Activated T-helper 2 cell treated with anti-CD3 and anti-CD28 coated beads, Interferon-gamma antibody, Interleukin-2, Interleukin-4, amounts not matched to agents 10 μg/mL and 5 μg/mL and 100 μg/mL, durations not matched to agents 14 hours and 24 hours and 36 hours (primary cell): ENCODE measurements at regions of chr12 and their contacts with region 1.

Region 1: DNA sequence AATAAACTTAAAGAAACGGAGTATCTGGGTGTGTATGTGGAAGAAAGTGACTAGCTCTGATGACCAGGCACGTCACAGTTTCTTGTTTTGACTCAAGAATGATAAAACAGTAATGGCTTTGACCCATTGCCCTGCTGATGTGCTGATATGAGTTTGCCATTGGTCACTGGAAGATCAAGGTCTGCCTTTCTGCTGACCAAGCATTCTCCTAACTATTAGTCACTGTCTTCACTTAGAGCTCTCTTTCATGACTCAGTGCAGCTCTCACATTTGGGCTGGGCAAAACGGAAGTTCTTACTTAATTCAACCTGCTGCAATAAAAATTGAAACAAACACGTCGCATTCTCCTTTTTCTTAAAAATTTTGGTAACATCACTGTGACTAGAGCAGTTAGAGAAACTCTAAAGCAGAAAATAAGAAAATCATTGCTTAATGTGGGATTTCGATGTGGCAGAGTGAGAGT is 366.7 kb downstream of the BTG1 start:
- DNase-seq: peak; percentile 17
- H3K4me3 Mint-ChIP-seq: peak overlapping the region; percentile 62
- H3K27ac Mint-ChIP-seq: peak overlapping the region; percentile 70
- H3K4me1 Mint-ChIP-seq: peaks cover 24% of the 10 kb centered on the region
- H3K27me3 Mint-ChIP-seq: peaks cover 4% of the 10 kb centered on the region

Region 2: DNA sequence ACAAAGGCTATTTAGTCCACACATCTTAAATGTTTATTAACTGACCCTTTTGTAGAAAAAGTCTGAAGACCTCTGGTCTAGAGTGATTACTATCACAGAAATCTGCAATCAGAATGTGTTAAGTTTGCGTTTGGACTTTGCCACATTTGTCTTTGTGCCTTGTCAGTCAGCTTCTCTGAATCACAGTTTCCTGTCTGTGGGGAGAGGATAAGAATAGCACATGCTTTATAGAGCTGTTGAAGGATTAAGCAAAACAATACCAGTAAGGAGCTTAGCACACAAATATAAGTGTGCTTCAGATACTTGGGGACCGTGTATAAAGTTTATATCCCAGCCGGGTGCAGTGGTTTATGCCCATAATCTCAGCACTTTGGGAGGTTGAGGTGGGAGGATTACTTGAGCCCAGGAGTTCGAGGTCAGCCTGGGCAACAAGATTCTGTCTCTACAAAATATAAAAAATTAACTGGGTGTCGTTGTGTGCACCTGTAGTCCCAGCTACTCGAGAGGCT is 429.7 kb after region 1 on chr12:
- intact Hi-C with region 1: loop called (anchors 10 kb)
- DNase-seq: peak; percentile 19
- H3K4me3 Mint-ChIP-seq: peak overlapping the region; percentile 22
- H3K27ac Mint-ChIP-seq: peak overlapping the region; percentile 24
- H3K4me1 Mint-ChIP-seq: peaks cover 37% of the 10 kb centered on the region
- H3K27me3 Mint-ChIP-seq: no peaks in the 10 kb centered on the region

Region 3: GRCh38 chr12:92469837-92470236 is 690.9 kb after region 1 on chr12:
- intact Hi-C with region 1: loop called (anchors 10 kb)
- DNase-seq: no peak
- H3K4me3 Mint-ChIP-seq: no peak overlapping the region
- H3K27ac Mint-ChIP-seq: no peak overlapping the region
- H3K4me1 Mint-ChIP-seq: peaks cover 23% of the 10 kb centered on the region
- H3K27me3 Mint-ChIP-seq: no peaks in the 10 kb centered on the region